Heart left ventricle (tissue), 16 donors: ENCODE measurements at regions of chr12 and their contacts with region 1.

Region 1: GRCh38 chr12:131894313-131894860 is at the start of gene ULK1:
- DNase-seq: peak; percentile 90 to 96 (median 93)
- ATAC-seq: peak; percentile 72 to 81 (median 74)
- H3K4me3 ChIP-seq: peak within 1 kb of the TSS; percentile 36 to 84 (median 64)
- H3K27ac ChIP-seq: peak within 1 kb of the TSS; percentile 96 to 100 (median 98)
- H3K4me1 ChIP-seq: peaks cover 0 to 39% (median 22%) of the 10 kb centered on the region in 12 donors
- H3K27me3 ChIP-seq: no peaks in the 10 kb centered on the region
- CTCF ChIP-seq: no peak
- POLR2A ChIP-seq: peak; percentile 92 to 95
- total RNA-seq, gene ULK1: 21.9 to 56.0 (median 42.4) TPM

Region 2: GRCh38 chr12:131710464-131711457 is 183.6 kb before region 1 on chr12 and contains the start of gene SFSWAP:
- intact Hi-C with region 1: no loop called
- DNase-seq: peak; percentile 74 to 88 (median 80)
- ATAC-seq: peak; percentile 86 to 98 (median 97)
- H3K4me3 ChIP-seq: peak within 1 kb of the TSS; percentile 69 to 100 (median 94)
- H3K27ac ChIP-seq: peak within 1 kb of the TSS; percentile 90 to 99 (median 96)
- H3K4me1 ChIP-seq: peaks cover 2 to 27% (median 21%) of the 10 kb centered on the region in 12 donors
- H3K27me3 ChIP-seq: no peaks in the 10 kb centered on the region
- CTCF ChIP-seq: peak in 1 of 12 donors; percentile 25
- POLR2A ChIP-seq: peak in 1 of 2 donors; percentile 37
- total RNA-seq, gene SFSWAP: 10.4 to 25.1 (median 18.6) TPM

Region 3: GRCh38 chr12:131928711-131929580 is 34.6 kb after region 1 on chr12 and contains the start of gene PUS1:
- intact Hi-C with region 1: loop called in 7 of 10 experiments (anchors 1 to 5 kb)
- DNase-seq: peak; percentile 95 to 97 (median 96)
- ATAC-seq: peak; percentile 82 to 97 (median 94)
- H3K4me3 ChIP-seq: peak within 1 kb of the TSS; percentile 62 to 94 (median 82)
- H3K27ac ChIP-seq: peak within 1 kb of the TSS; percentile 86 to 97 (median 92)
- H3K4me1 ChIP-seq: peaks cover 0 to 34% (median 16%) of the 10 kb centered on the region in 12 donors
- H3K27me3 ChIP-seq: no peaks in the 10 kb centered on the region
- CTCF ChIP-seq: no peak
- POLR2A ChIP-seq: peak in 1 of 2 donors; percentile 91
- total RNA-seq, gene PUS1: 6.1 to 10.7 (median 8.1) TPM